ENCODE measurements at regions of chr12 and their contacts with region 1.

Region 1: DNA sequence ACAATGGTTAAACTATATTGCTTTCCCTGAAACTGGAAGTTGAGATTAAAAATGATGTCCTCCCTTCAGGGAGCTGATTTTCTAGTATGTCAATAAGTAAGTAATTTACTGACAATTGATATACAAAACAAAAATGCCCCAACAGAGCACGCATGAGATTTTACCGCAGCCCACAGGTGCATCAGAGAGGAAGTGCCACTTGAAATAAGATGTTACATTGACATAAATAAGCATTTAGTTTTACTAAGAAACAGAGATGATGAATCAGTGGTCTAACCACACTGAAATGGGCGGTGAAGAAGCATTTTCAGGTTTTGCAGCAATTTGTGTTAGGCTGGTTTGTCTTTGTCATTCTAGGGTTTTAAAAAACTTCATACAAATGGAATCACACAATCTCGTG is 8.8 kb upstream of the CLECL1 start:
- DNase-seq: peak; percentile 89
- ATAC-seq: peak; percentile 82
- H3K4me3 ChIP-seq: peak overlapping the region; percentile 36; the same call in 1 of the 2 replicates
- H3K27ac ChIP-seq: peak overlapping the region; percentile 72
- H3K4me1 ChIP-seq: peaks cover 30% of the 10 kb centered on the region
- H3K27me3 ChIP-seq: no peaks in the 10 kb centered on the region
- CTCF ChIP-seq: no peak
- EP300 ChIP-seq: peak; percentile 96 to 97
- POLR2A ChIP-seq: no peak
- RAD21 ChIP-seq: no peak

Region 2: DNA sequence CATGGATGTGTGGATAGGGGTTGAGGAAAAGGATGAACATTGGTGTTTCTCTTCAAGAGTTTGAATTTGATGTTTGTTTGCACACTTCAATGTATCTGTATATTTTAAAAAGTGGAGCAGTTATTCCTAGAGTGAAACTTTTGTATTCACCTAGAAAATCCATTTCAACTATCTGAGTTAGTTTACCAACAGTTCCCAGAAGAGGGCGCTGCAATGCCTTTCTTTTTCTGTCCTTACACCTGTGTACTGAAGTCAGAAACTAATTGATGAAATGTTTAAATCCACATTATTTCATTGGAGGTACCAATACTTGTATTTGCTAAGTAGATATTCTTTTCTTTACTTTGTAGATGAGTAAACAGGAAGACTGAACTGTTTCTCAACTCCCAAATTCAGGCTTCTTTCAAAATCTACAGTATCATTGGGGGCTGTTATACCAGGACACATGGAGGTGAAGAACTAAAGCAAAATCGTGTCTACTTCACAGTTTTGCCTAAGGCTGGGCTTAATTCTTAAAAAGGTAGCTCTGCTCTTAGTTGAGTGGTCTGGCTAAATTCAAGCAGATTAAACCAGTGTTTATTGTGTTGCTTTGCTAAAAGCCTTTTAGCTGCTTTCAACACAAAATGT is 107.4 kb before region 1 on chr12:
- CTCF ChIA-PET with region 1: interaction called, 13 read pairs
- POLR2A ChIA-PET with region 1: no interaction called
- RAD21 ChIA-PET with region 1: interaction called, 4 read pairs
- SMC1A ChIA-PET with region 1: interaction called, 9 read pairs
- in situ Hi-C with region 1: no loop called
- intact Hi-C with region 1: no loop called
- DNase-seq: no peak
- ATAC-seq: peak; percentile 79
- H3K4me3 ChIP-seq: no peak overlapping the region
- H3K27ac ChIP-seq: no peak overlapping the region
- H3K4me1 ChIP-seq: peaks cover 15% of the 10 kb centered on the region; the same call in 1 of the 2 replicates
- H3K27me3 ChIP-seq: no peaks in the 10 kb centered on the region
- CTCF ChIP-seq: peak; percentile 52 to 71 (median 61); a peak in 5 of 6 replicates
- EP300 ChIP-seq: no peak
- POLR2A ChIP-seq: no peak
- RAD21 ChIP-seq: peak; percentile 91

Region 3: GRCh38 chr12:9760699-9761418 is 19.1 kb after region 1 on chr12 and contains the start of gene CD69:
- CTCF ChIA-PET with region 1: interaction called, 102 read pairs
- POLR2A ChIA-PET with region 1: interaction called, 6 read pairs
- RAD21 ChIA-PET with region 1: interaction called, 9 read pairs
- SMC1A ChIA-PET with region 1: interaction called, 26 read pairs
- in situ Hi-C with region 1: no loop called
- intact Hi-C with region 1: no loop called
- DNase-seq: peak; percentile 95
- ATAC-seq: peak; percentile 64
- H3K4me3 ChIP-seq: peak within 1 kb of the TSS; percentile 87
- H3K27ac ChIP-seq: peak within 1 kb of the TSS; percentile 76
- H3K4me1 ChIP-seq: peaks cover 18% of the 10 kb centered on the region
- H3K27me3 ChIP-seq: no peaks in the 10 kb centered on the region
- CTCF ChIP-seq: no peak
- EP300 ChIP-seq: peak; percentile 62 to 68; a peak in 3 of 4 replicates
- POLR2A ChIP-seq: peak; percentile 94
- RAD21 ChIP-seq: no peak
- polyA plus RNA-seq, gene CD69: 32.9 to 55.7 TPM

Region 4: DNA sequence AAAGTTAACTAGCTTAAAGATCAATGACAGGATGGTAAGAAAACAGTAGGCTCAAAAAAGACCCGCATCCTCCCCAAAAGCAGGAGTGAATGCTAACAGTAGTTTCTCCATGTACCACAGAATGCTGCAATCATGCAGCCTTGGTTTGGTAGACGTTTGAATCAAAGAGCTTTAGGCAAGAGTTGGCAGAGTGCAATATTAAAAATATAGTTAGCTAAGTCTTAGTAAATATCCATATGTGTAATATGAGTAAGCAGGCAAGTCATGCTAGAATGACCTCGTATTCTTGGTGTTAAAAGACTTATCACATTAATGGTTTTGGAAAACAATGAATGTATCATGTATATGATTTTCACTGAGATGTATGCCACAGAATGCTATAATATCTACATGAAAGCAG is 66.8 kb after region 1 on chr12:
- CTCF ChIA-PET with region 1: interaction called, 835 read pairs
- POLR2A ChIA-PET with region 1: no interaction called
- RAD21 ChIA-PET with region 1: interaction called, 3 read pairs
- SMC1A ChIA-PET with region 1: interaction called, 814 read pairs
- in situ Hi-C with region 1: no loop called
- intact Hi-C with region 1: no loop called
- DNase-seq: no peak
- ATAC-seq: no peak
- H3K4me3 ChIP-seq: no peak overlapping the region
- H3K27ac ChIP-seq: no peak overlapping the region
- H3K4me1 ChIP-seq: no peaks in the 10 kb centered on the region
- H3K27me3 ChIP-seq: no peaks in the 10 kb centered on the region; a peak in 1 of 4 replicates
- CTCF ChIP-seq: no peak
- EP300 ChIP-seq: no peak
- POLR2A ChIP-seq: no peak
- RAD21 ChIP-seq: no peak

Region 5: GRCh38 chr12:9925708-9926393 is 184.1 kb after region 1 on chr12:
- CTCF ChIA-PET with region 1: interaction called, 97 read pairs
- POLR2A ChIA-PET with region 1: no interaction called
- RAD21 ChIA-PET with region 1: interaction called, 3 read pairs
- SMC1A ChIA-PET with region 1: no interaction called
- in situ Hi-C with region 1: loop called (anchors 5 kb)
- intact Hi-C with region 1: no loop called
- DNase-seq: no peak
- ATAC-seq: peak; percentile 67
- H3K4me3 ChIP-seq: no peak overlapping the region
- H3K27ac ChIP-seq: no peak overlapping the region
- H3K4me1 ChIP-seq: no peaks in the 10 kb centered on the region
- H3K27me3 ChIP-seq: no peaks in the 10 kb centered on the region
- CTCF ChIP-seq: peak; percentile 38 to 46 (median 43); a peak in 5 of 6 replicates
- EP300 ChIP-seq: no peak
- POLR2A ChIP-seq: no peak
- RAD21 ChIP-seq: peak; percentile 59

Region 6: GRCh38 chr12:10140001-10140400 is 398.3 kb after region 1 on chr12:
- CTCF ChIA-PET with region 1: interaction called, 6 read pairs
- POLR2A ChIA-PET with region 1: no interaction called
- RAD21 ChIA-PET with region 1: interaction called, 3 read pairs
- SMC1A ChIA-PET with region 1: interaction called, 6 read pairs
- in situ Hi-C with region 1: loop called (anchors 5 kb)
- intact Hi-C with region 1: loop called (anchors 5 kb)
- DNase-seq: peak; percentile 48
- ATAC-seq: peak; percentile 47; the same call in 2 of the 3 replicates
- H3K4me3 ChIP-seq: no peak overlapping the region
- H3K27ac ChIP-seq: no peak overlapping the region
- H3K4me1 ChIP-seq: no peaks in the 10 kb centered on the region
- H3K27me3 ChIP-seq: no peaks in the 10 kb centered on the region; a peak in 1 of 4 replicates
- CTCF ChIP-seq: peak; percentile 47 to 77 (median 57); a peak in 5 of 6 replicates
- EP300 ChIP-seq: no peak
- POLR2A ChIP-seq: no peak
- RAD21 ChIP-seq: peak; percentile 97

Region 7: GRCh38 chr12:10158406-10158805 is 416.7 kb after region 1 on chr12:
- CTCF ChIA-PET with region 1: no interaction called
- POLR2A ChIA-PET with region 1: no interaction called
- RAD21 ChIA-PET with region 1: no interaction called
- SMC1A ChIA-PET with region 1: no interaction called
- in situ Hi-C with region 1: no loop called
- intact Hi-C with region 1: no loop called
- DNase-seq: no peak
- ATAC-seq: no peak
- H3K4me3 ChIP-seq: no peak overlapping the region
- H3K27ac ChIP-seq: no peak overlapping the region
- H3K4me1 ChIP-seq: peaks cover 11% of the 10 kb centered on the region; the same call in 1 of the 2 replicates
- H3K27me3 ChIP-seq: peaks cover 0 to 5% of the 10 kb centered on the region in 2 experiments; a peak in 2 of 4 replicates
- CTCF ChIP-seq: no peak
- EP300 ChIP-seq: no peak
- POLR2A ChIP-seq: no peak
- RAD21 ChIP-seq: no peak